Prostate gland (tissue), 2 donors: ENCODE measurements at regions of chr15 and their contacts with region 1.

Region 1: DNA sequence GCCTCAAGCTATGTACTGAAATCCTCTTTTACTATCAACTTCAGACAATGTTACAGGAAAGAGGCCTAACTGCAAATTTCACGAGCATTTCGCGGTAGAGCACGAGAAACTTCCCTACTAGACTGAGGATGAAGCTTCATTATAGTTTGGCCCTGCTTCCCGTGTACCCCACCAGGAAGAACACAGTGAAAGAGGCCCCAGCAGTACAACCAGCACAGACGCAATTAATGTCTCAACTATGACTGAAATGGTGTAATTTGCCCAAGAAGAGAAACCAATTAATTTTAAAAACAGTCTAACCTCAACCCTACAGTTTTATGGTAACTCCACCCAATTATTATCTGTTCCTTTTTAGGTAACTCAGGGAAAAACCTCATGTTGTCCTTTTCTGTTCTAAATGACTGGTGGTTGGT is 12.1 kb downstream of the CHSY1 start:
- DNase-seq: no peak
- H3K4me3 ChIP-seq: no peak overlapping the region
- H3K27ac ChIP-seq: peak overlapping the region; percentile 30 to 32
- H3K4me1 ChIP-seq: peaks cover 29% of the 10 kb centered on the region
- H3K27me3 ChIP-seq: no peaks in the 10 kb centered on the region
- CTCF ChIP-seq: no peak
- POLR2A ChIP-seq: no peak

Region 2: DNA sequence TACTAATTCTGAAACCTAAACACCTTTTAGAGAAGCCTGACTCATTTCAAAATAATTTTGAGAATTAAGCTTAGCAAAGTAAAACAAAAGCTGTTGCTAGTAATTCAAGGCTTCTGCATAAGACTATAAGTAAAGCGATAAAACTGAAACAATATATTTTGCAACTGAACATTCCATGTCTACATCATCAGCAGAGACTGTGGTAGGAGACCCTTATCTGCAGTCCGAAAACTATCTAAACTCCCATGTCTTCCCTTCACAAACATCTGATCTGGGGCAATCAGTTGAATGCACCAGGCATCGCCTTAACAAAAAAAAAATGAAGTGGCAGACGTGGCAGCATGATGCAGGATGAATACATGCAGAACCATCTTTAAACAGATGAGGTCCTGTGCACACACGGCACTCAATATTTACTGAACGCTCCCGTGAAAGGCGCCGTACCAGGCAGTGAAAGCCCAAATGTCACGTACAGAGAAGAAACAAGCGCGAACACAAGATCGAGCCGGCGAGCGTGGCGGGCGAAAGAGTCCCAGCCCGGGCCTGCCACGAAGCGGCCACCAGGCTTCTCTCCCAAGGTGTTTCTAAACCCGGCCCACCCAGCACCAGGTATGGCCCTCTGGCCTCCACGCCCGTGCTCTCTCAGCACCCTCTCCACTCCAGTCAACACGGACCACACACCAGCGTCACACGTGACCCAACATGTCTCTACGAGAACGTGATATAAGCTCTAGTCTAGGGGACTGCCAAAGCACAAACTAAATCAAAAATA is 50.9 kb before region 1 on chr15:
- intact Hi-C with region 1: loop called (anchors 5 kb)
- DNase-seq: no peak
- H3K4me3 ChIP-seq: peak overlapping the region; percentile 11 to 18
- H3K27ac ChIP-seq: peak overlapping the region; percentile 79 to 81
- H3K4me1 ChIP-seq: peaks cover 34% of the 10 kb centered on the region
- H3K27me3 ChIP-seq: no peaks in the 10 kb centered on the region
- CTCF ChIP-seq: no peak
- POLR2A ChIP-seq: no peak

Region 3: GRCh38 chr15:101482526-101483371 is 243.0 kb after region 1 on chr15:
- intact Hi-C with region 1: no loop called
- DNase-seq: no peak
- H3K4me3 ChIP-seq: no peak overlapping the region
- H3K27ac ChIP-seq: no peak overlapping the region
- H3K4me1 ChIP-seq: no peaks in the 10 kb centered on the region
- H3K27me3 ChIP-seq: no peaks in the 10 kb centered on the region
- CTCF ChIP-seq: no peak
- POLR2A ChIP-seq: no peak